Activated CD4-positive, alpha-beta T cell treated with anti-CD3 and anti-CD28 coated beads for 36 hours (primary cell): ENCODE measurements at regions of chr19 and their contacts with region 1.

Region 1: GRCh38 chr19:11924886-11925650 is at the start of gene ZNF700:
- DNase-seq: peak; percentile 97
- ATAC-seq: peak; percentile 92
- H3K4me3 Mint-ChIP-seq: peak within 1 kb of the TSS; percentile 81
- H3K27ac Mint-ChIP-seq: peak within 1 kb of the TSS; percentile 99
- H3K4me1 Mint-ChIP-seq: peaks cover 40% of the 10 kb centered on the region
- H3K27me3 Mint-ChIP-seq: no peaks in the 10 kb centered on the region
- total RNA-seq, gene ZNF700: 13.3 to 14.5 TPM

Region 2: GRCh38 chr19:11881151-11881800 is 43.8 kb before region 1 on chr19:
- CTCF ChIA-PET with region 1: interaction called, 17 read pairs
- POLR2A ChIA-PET with region 1: no interaction called
- intact Hi-C with region 1: loop called in 1 of 2 experiments (anchors 2 kb)
- DNase-seq: peak; percentile 75
- ATAC-seq: peak; percentile 77
- H3K4me3 Mint-ChIP-seq: no peak overlapping the region
- H3K27ac Mint-ChIP-seq: no peak overlapping the region
- H3K4me1 Mint-ChIP-seq: no peaks in the 10 kb centered on the region
- H3K27me3 Mint-ChIP-seq: no peaks in the 10 kb centered on the region

Region 3: DNA sequence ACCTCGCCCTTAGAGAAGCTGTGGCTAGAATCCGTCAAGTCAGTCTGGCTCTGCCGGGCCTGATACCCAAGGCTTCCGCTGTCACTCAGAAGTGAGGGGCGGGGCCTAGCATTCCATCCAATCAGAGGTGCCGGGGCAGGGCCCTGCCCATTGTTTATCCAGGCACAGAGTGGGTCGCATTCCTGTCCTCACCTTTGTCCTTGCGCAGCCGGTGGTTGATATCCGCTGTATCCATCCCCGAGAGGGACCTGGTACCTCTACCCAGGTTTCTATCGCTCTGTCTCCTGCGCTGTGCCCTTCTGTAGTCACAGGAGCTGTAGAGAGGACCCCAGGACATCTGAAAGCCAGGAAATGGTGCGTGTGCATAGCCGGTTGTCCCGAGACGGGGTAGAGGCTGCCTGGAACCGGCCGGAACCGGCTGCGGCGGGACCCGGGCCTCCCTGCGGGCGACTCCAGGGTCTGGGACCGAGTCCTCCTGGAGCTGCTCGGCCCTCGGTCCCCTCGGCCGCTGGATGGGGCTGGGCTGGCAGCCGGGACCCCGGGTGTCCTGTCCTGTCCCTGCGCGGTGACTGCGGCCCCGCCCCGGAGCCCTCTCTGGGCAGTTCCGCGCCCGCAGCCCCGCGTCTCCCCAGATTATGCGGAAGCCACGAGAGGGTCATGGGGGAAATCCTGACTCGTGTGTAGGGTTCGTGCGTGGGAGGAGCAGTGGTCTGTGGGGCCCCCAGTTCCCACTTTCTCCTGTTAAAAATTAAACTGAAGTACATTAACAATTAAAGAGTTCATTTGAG is 40.0 kb after region 1 on chr19 and contains the start of gene ZNF763:
- CTCF ChIA-PET with region 1: interaction called, 25 read pairs
- POLR2A ChIA-PET with region 1: no interaction called
- intact Hi-C with region 1: loop called (anchors 1 kb)
- DNase-seq: peak; percentile 94
- ATAC-seq: peak; percentile 98
- H3K4me3 Mint-ChIP-seq: peak within 1 kb of the TSS; percentile 84
- H3K27ac Mint-ChIP-seq: peak within 1 kb of the TSS; percentile 73
- H3K4me1 Mint-ChIP-seq: peaks cover 20% of the 10 kb centered on the region
- H3K27me3 Mint-ChIP-seq: no peaks in the 10 kb centered on the region
- total RNA-seq, gene ZNF763: 1.1 to 1.2 TPM

Region 4: GRCh38 chr19:12035220-12036153 is 110.4 kb after region 1 on chr19 and contains the start of gene ZNF433:
- CTCF ChIA-PET with region 1: interaction called, 3 read pairs
- POLR2A ChIA-PET with region 1: no interaction called
- intact Hi-C with region 1: loop called in 1 of 2 experiments (anchors 1 kb)
- DNase-seq: peak; percentile 89
- ATAC-seq: peak; percentile 97
- H3K4me3 Mint-ChIP-seq: peak within 1 kb of the TSS; percentile 77
- H3K27ac Mint-ChIP-seq: peak within 1 kb of the TSS; percentile 82
- H3K4me1 Mint-ChIP-seq: peaks cover 9% of the 10 kb centered on the region
- H3K27me3 Mint-ChIP-seq: peaks cover 3% of the 10 kb centered on the region
- total RNA-seq, gene ZNF433: 1.2 to 1.5 TPM

Region 5: GRCh38 chr19:12092065-12092867 is 167.2 kb after region 1 on chr19:
- CTCF ChIA-PET with region 1: interaction called, 12 read pairs
- POLR2A ChIA-PET with region 1: no interaction called
- intact Hi-C with region 1: loop called in 1 of 2 experiments (anchors 1 kb)
- DNase-seq: peak; percentile 90
- ATAC-seq: peak; percentile 92
- H3K4me3 Mint-ChIP-seq: peak overlapping the region; percentile 80
- H3K27ac Mint-ChIP-seq: peak overlapping the region; percentile 69
- H3K4me1 Mint-ChIP-seq: peaks cover 10% of the 10 kb centered on the region
- H3K27me3 Mint-ChIP-seq: peaks cover 6% of the 10 kb centered on the region

Region 6: GRCh38 chr19:12202250-12202649 is 277.2 kb after region 1 on chr19:
- CTCF ChIA-PET with region 1: no interaction called
- POLR2A ChIA-PET with region 1: no interaction called
- intact Hi-C with region 1: no loop called
- DNase-seq: peak; percentile 80
- ATAC-seq: peak; percentile 96
- H3K4me3 Mint-ChIP-seq: no peak overlapping the region
- H3K27ac Mint-ChIP-seq: no peak overlapping the region
- H3K4me1 Mint-ChIP-seq: peaks cover 23% of the 10 kb centered on the region
- H3K27me3 Mint-ChIP-seq: no peaks in the 10 kb centered on the region

Region 7: DNA sequence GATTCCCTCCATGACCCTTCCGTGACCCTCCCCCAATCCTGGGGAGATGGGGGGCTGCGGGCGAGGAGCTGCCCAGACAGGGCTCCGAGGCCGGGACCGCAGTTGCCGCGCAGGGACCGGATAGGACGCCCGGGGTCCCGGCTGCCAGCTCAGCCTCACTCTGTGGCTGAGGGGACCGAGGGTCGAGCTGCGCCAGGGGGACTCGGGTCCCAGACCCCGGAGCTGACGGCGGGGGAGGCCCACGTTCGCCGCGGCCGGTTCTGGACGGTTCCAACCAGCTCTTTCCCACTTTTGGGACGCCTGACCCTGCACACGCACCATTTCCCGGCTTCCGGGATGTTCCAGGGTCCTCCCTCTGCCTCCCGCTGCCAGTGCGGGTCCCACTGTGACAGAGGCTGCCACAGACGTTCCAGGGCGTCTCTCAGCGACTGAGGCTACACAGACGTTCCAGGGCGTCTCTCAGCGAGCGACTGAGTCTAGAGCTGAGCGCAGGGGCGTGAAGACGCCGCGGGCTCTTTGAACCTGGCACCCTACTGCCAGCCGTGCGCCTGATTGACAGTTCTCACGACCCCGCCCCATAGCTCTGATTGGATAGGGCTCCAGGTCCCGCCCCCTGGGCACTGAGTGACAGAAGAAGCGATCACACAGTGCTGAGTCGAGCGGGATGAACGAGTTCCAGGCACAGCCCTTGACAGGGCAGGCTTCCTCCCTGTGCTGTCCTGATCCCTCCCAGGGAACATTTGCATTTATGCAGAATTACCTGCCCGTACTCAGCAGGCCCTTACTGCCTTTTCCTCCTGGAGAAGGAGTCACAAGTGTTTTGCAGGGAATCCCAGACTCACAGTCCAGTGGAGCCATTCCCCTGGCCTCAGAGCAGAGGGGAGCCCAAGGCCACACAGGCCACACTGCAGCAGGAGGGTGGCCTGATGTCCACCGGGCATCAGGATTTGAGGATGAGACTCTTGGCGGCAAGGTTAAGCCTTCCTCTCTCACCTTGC is 408.4 kb after region 1 on chr19 and contains the start of gene ZNF563:
- CTCF ChIA-PET with region 1: no interaction called
- POLR2A ChIA-PET with region 1: no interaction called
- intact Hi-C with region 1: loop called in 1 of 2 experiments (anchors 1 kb)
- DNase-seq: peak; percentile 99
- ATAC-seq: peak; percentile 93
- H3K4me3 Mint-ChIP-seq: peak within 1 kb of the TSS; percentile 78
- H3K27ac Mint-ChIP-seq: peak within 1 kb of the TSS; percentile 98
- H3K4me1 Mint-ChIP-seq: peaks cover 32% of the 10 kb centered on the region
- H3K27me3 Mint-ChIP-seq: no peaks in the 10 kb centered on the region
- total RNA-seq, gene ZNF563: 6.6 to 6.7 TPM